ENCODE measurements at regions of chr11 and their contacts with region 1.

Region 1: GRCh38 chr11:45073685-45074141 is 72.7 kb upstream of the PRDM11 start:
- DNase-seq: no peak
- H3K4me3 ChIP-seq: no peak overlapping the region
- H3K4me3 Mint-ChIP-seq: no peak overlapping the region
- H3K27ac Mint-ChIP-seq: no peak overlapping the region
- H3K4me1 ChIP-seq: no peaks in the 10 kb centered on the region
- H3K4me1 Mint-ChIP-seq: no peaks in the 10 kb centered on the region
- H3K27me3 ChIP-seq: peaks cover 2% of the 10 kb centered on the region
- H3K27me3 Mint-ChIP-seq: peaks cover 20% of the 10 kb centered on the region
- CTCF ChIP-seq: no peak

Region 2: GRCh38 chr11:44763111-44763820 is 310.4 kb before region 1 on chr11:
- CTCF ChIA-PET with region 1: interaction called, 10 read pairs
- POLR2A ChIA-PET with region 1: no interaction called
- intact Hi-C with region 1: no loop called
- DNase-seq: peak in 1 of 2 experiments; percentile 19
- H3K4me3 ChIP-seq: no peak overlapping the region
- H3K4me3 Mint-ChIP-seq: no peak overlapping the region
- H3K27ac Mint-ChIP-seq: no peak overlapping the region
- H3K4me1 ChIP-seq: no peaks in the 10 kb centered on the region
- H3K4me1 Mint-ChIP-seq: no peaks in the 10 kb centered on the region
- H3K27me3 ChIP-seq: no peaks in the 10 kb centered on the region
- H3K27me3 Mint-ChIP-seq: no peaks in the 10 kb centered on the region
- CTCF ChIP-seq: no peak

Region 3: GRCh38 chr11:44852159-44852747 is 221.5 kb before region 1 on chr11:
- CTCF ChIA-PET with region 1: no interaction called
- POLR2A ChIA-PET with region 1: no interaction called
- intact Hi-C with region 1: no loop called
- DNase-seq: no peak
- H3K4me3 ChIP-seq: no peak overlapping the region
- H3K4me3 Mint-ChIP-seq: no peak overlapping the region
- H3K27ac Mint-ChIP-seq: no peak overlapping the region
- H3K4me1 ChIP-seq: no peaks in the 10 kb centered on the region
- H3K4me1 Mint-ChIP-seq: no peaks in the 10 kb centered on the region
- H3K27me3 ChIP-seq: no peaks in the 10 kb centered on the region
- H3K27me3 Mint-ChIP-seq: no peaks in the 10 kb centered on the region
- CTCF ChIP-seq: no peak

Region 4: DNA sequence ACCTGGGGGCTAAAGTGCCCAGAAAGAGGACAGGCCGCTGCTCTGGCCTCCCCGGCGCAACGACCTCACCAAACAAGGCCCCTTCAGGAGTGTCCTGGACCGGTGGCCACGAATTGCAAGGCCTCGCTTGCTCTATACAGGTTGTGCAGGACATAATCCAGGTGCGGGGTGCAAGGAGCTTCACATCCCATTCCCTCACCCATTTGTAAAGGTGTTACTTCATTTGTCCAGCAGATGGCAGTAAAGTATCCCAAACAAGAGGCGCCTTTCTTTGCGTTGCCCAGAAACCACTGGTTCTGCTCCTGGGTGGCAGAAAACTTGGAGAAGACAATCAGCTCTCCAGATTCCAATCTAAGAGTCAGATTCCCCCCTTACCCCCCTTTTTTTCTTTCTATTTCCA is 36.8 kb after region 1 on chr11:
- CTCF ChIA-PET with region 1: no interaction called
- POLR2A ChIA-PET with region 1: no interaction called
- intact Hi-C with region 1: no loop called
- DNase-seq: peak in 1 of 2 experiments; percentile 75
- H3K4me3 ChIP-seq: no peak overlapping the region
- H3K4me3 Mint-ChIP-seq: no peak overlapping the region
- H3K27ac Mint-ChIP-seq: no peak overlapping the region
- H3K4me1 ChIP-seq: peaks cover 9% of the 10 kb centered on the region; the same call in 1 of the 2 replicates
- H3K4me1 Mint-ChIP-seq: no peaks in the 10 kb centered on the region
- H3K27me3 ChIP-seq: no peaks in the 10 kb centered on the region
- H3K27me3 Mint-ChIP-seq: peaks cover 14% of the 10 kb centered on the region
- CTCF ChIP-seq: peak; percentile 74 to 86

Region 5: DNA sequence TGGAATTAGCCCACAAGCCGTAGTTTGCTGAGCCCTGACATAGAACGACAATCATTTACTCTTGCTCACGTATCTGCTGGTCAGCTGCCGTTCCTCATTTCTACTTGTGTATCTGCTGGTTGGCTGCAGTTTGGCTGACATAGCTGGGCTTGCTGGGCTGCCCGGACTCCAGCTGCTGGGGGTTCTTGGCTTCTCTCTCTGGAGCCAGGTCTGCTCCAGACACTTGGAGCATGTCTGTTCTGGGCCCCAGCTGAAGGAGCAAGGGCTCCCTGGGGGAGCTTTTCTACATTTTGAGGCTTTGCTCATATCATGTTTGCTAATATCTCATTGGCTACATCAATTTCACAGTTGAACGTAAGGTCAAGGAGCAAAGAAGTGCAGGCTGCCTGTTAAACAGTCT is 120.0 kb after region 1 on chr11:
- CTCF ChIA-PET with region 1: no interaction called
- POLR2A ChIA-PET with region 1: no interaction called
- intact Hi-C with region 1: no loop called
- DNase-seq: no peak
- H3K4me3 ChIP-seq: no peak overlapping the region
- H3K4me3 Mint-ChIP-seq: no peak overlapping the region
- H3K27ac Mint-ChIP-seq: no peak overlapping the region
- H3K4me1 ChIP-seq: no peaks in the 10 kb centered on the region
- H3K4me1 Mint-ChIP-seq: no peaks in the 10 kb centered on the region
- H3K27me3 ChIP-seq: no peaks in the 10 kb centered on the region
- H3K27me3 Mint-ChIP-seq: no peaks in the 10 kb centered on the region
- CTCF ChIP-seq: no peak